B cell (primary cell): ENCODE measurements at regions of chr3 and their contacts with region 1.

Region 1: DNA sequence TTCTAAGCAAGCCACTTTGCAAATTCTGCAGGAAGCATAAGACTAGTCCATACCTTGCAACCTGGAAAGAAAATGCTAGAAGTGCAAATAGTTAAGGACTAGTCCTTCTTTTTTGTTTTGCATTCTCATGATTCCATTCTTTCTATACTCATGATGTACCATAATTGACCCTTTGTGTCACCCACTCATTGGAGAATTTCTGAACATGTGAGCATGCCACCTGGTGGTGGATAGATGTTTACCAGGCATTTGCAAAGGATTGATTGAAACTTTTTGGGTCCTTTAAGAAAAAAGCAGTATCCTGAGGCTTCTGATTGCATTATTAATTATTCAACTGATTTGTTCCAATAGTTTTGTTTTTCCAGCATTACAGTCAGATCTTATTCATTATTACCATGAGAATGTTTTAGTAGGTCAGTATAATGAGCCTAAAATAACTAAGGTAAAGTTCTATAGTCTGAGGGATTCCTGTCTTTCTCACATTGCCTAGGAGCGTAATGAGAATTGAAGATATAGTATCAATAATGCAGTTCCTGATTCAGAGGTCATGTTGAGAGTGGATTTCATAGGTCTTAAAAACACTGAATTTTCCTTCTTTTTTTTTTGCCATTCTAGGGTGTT is 20.2 kb upstream of the DIPK2A start:
- DNase-seq: peak; percentile 69
- ATAC-seq: peak; percentile 64
- H3K4me3 ChIP-seq: no peak overlapping the region
- H3K4me3 Mint-ChIP-seq: no peak overlapping the region
- H3K27ac ChIP-seq: no peak overlapping the region
- H3K27ac Mint-ChIP-seq: no peak overlapping the region
- H3K4me1 ChIP-seq: no peaks in the 10 kb centered on the region
- H3K4me1 Mint-ChIP-seq: no peaks in the 10 kb centered on the region
- H3K27me3 ChIP-seq: no peaks in the 10 kb centered on the region
- H3K27me3 Mint-ChIP-seq: peaks cover 5% of the 10 kb centered on the region
- CTCF ChIP-seq: peak; percentile 91

Region 2: DNA sequence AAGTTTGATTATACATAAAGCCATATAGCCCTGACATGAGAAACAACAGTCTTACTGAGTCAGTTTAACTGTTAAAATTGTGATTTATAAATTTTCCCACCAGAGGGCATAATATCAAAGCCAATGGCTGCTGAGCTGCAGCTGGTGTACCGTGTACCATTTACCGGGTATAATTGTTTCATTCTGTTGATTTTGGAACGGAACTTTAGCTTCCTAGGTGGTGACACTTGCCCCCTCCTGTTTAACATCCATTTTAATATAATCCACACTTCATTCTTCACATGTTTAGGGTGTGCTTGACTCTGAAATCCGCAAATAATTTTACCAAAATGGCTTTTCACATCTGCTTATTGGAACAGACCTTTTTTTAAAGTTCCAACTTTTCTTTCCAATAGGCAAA is 176.0 kb before region 1 on chr3:
- CTCF ChIA-PET with region 1: interaction called, 3 read pairs
- POLR2A ChIA-PET with region 1: no interaction called
- intact Hi-C with region 1: loop called (anchors 1 kb)
- DNase-seq: peak; percentile 47
- ATAC-seq: peak; percentile 72
- H3K4me3 ChIP-seq: no peak overlapping the region
- H3K4me3 Mint-ChIP-seq: no peak overlapping the region
- H3K27ac ChIP-seq: no peak overlapping the region
- H3K27ac Mint-ChIP-seq: no peak overlapping the region
- H3K4me1 ChIP-seq: peaks cover 0 to 5% of the 10 kb centered on the region in 2 donors
- H3K4me1 Mint-ChIP-seq: peaks cover 4% of the 10 kb centered on the region
- H3K27me3 ChIP-seq: no peaks in the 10 kb centered on the region
- H3K27me3 Mint-ChIP-seq: no peaks in the 10 kb centered on the region
- CTCF ChIP-seq: peak; percentile 71

Region 3: GRCh38 chr3:143885780-143886427 is 65.6 kb before region 1 on chr3:
- CTCF ChIA-PET with region 1: interaction called, 53 read pairs
- POLR2A ChIA-PET with region 1: no interaction called
- intact Hi-C with region 1: loop called (anchors 1 kb)
- DNase-seq: peak; percentile 61
- ATAC-seq: peak; percentile 80
- H3K4me3 ChIP-seq: no peak overlapping the region
- H3K4me3 Mint-ChIP-seq: no peak overlapping the region
- H3K27ac ChIP-seq: no peak overlapping the region
- H3K27ac Mint-ChIP-seq: no peak overlapping the region
- H3K4me1 ChIP-seq: no peaks in the 10 kb centered on the region
- H3K4me1 Mint-ChIP-seq: no peaks in the 10 kb centered on the region
- H3K27me3 ChIP-seq: peaks cover 0 to 2% (median 0%) of the 10 kb centered on the region in 4 experiments
- H3K27me3 Mint-ChIP-seq: no peaks in the 10 kb centered on the region
- CTCF ChIP-seq: peak; percentile 88

Region 4: GRCh38 chr3:143895805-143896204 is 55.7 kb before region 1 on chr3:
- CTCF ChIA-PET with region 1: interaction called, 178 read pairs
- POLR2A ChIA-PET with region 1: no interaction called
- intact Hi-C with region 1: loop called (anchors 1 kb)
- DNase-seq: peak; percentile 49
- ATAC-seq: peak; percentile 31
- H3K4me3 ChIP-seq: no peak overlapping the region
- H3K4me3 Mint-ChIP-seq: no peak overlapping the region
- H3K27ac ChIP-seq: no peak overlapping the region
- H3K27ac Mint-ChIP-seq: no peak overlapping the region
- H3K4me1 ChIP-seq: no peaks in the 10 kb centered on the region
- H3K4me1 Mint-ChIP-seq: no peaks in the 10 kb centered on the region
- H3K27me3 ChIP-seq: peaks cover 0 to 2% (median 0%) of the 10 kb centered on the region in 4 experiments
- H3K27me3 Mint-ChIP-seq: peaks cover 8% of the 10 kb centered on the region
- CTCF ChIP-seq: peak; percentile 77

Region 5: DNA sequence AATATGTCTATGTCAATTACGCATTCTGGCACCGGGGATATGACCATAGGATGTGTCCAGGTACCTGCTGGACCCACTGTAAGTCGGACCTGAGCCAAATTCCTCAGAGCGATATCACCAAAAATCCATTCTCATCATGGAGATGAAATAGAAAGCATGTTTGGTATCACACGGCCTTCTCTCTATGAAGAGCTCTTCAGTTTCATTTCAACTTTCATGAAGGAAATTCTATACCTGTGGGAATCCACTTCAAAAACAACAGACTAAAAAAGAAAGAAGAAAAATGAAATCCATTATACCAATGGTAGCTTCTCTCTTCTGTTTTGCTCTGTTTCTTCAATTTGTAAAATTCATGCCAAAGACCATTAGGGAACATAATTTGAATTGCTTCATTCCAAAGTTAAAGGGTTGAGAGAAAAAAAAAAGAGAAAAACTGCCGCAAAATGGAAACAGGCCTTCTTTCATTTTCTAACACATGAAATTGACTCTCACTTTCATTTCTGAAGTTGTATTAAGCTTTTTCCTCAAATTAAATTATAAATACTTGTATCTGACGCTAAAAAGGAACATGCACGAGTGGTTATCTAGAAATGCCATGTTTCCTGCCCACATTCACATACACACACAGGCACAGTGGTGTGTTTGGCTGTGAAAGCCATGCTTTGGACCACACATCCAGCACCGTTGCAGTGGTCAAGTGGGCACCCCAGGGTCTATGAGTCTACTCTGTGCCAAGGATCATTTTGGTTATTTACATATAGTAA is 26.8 kb before region 1 on chr3:
- CTCF ChIA-PET with region 1: interaction called, 3 read pairs
- POLR2A ChIA-PET with region 1: no interaction called
- intact Hi-C with region 1: loop called (anchors 2 kb)
- DNase-seq: peak; percentile 58
- ATAC-seq: peak; percentile 78
- H3K4me3 ChIP-seq: peak overlapping the region in 3 of 5 experiments; percentile 16 to 43 (median 25)
- H3K4me3 Mint-ChIP-seq: peak overlapping the region; percentile 84
- H3K27ac ChIP-seq: peak overlapping the region; percentile 73 to 86
- H3K27ac Mint-ChIP-seq: peak overlapping the region; percentile 96
- H3K4me1 ChIP-seq: peaks cover 68 to 76% of the 10 kb centered on the region in 2 donors
- H3K4me1 Mint-ChIP-seq: peaks cover 79% of the 10 kb centered on the region
- H3K27me3 ChIP-seq: no peaks in the 10 kb centered on the region
- H3K27me3 Mint-ChIP-seq: no peaks in the 10 kb centered on the region
- CTCF ChIP-seq: no peak